ENCODE measurements at regions of chr15 and their contacts with region 1.

Region 1: GRCh38 chr15:45790325-45790943 is 155.6 kb downstream of the SQOR start:
- DNase-seq: no peak
- H3K4me3 ChIP-seq: no peak overlapping the region
- H3K27me3 ChIP-seq: 0 out of 2 replicates have a peak, but pooled peaks cover 1% of the 10 kb centered on the region
- CTCF ChIP-seq: peak; percentile 58

Region 2: GRCh38 chr15:45634442-45635190 is 155.8 kb before region 1 on chr15 and contains the start of gene SQOR:
- CTCF ChIA-PET with region 1: no interaction called
- POLR2A ChIA-PET with region 1: no interaction called
- DNase-seq: no peak
- H3K4me3 ChIP-seq: peak within 1 kb of the TSS; percentile 69
- H3K27me3 ChIP-seq: no peaks in the 10 kb centered on the region
- CTCF ChIP-seq: no peak
- polyA plus RNA-seq, gene SQOR: 40.6 and 47.5 TPM in 2 replicates

Region 3: DNA sequence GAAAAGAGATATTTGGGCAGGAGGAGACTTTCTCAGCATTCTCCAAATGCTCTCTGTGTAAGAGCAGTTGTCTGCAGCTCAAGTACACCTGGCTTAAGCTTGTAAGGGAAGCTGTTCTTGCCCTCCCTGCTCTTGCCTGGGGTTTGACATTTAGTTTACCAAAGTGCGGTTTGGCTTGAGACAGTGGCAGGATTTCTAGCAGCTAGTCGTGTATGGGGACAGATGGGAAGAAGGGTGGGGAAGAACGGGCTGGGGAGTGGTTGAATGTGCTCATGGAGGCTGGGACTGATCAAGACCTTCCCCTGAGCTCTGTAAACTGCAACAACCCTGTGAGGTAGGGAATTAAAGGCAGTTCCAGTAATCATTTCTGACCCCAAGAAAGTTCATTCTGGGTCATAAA is 115.8 kb before region 1 on chr15:
- CTCF ChIA-PET with region 1: no interaction called
- POLR2A ChIA-PET with region 1: no interaction called
- DNase-seq: no peak
- H3K4me3 ChIP-seq: no peak overlapping the region
- H3K27me3 ChIP-seq: no peaks in the 10 kb centered on the region
- CTCF ChIP-seq: no peak

Region 4: DNA sequence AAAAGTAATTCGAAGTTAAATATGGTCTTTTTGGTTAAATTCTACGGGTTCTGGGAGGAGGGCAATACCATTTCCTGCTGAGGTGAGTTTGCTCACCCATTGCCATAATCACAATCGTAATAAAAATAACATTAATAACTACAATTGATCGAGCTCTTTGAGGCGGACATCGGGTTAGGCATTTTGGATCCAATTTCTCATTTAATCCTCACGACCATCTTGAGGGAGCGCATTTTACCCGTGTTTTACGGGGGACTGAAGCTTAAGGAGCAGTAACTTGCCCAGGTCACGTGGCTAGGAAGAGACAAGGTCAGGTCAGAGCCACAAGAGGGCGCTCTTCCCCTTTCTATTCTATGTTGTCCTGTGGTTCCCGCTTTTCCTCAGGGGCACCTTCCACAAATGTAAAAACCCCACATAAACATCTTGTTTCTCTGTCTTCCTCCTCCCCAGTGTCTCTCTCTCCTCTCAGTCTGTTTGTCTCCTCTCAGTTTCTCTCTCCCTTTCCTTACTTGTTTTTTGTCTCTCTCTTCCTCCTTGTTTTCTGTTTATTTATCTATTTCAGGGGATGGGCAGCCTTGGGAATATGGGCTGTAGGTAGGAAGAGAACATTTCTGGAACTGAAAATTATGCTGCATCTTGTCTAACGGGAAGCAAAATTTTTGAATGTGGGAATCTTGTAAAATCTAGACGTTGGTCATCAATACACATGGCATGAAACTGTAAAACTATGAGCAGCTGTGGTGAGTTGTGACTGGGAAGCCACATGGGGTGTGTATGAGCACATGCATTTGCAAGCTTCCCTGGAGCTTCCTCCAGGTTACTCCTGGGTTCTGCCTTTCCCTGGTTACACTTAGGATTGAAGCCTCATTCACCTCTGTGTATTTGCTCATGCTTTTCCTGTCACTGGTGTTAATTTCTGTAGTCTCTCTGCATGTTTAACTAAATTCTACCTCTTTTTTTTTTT is 84.6 kb before region 1 on chr15:
- CTCF ChIA-PET with region 1: interaction called, 11 read pairs
- POLR2A ChIA-PET with region 1: no interaction called
- DNase-seq: peak; percentile 25
- H3K4me3 ChIP-seq: peak overlapping the region; percentile 53
- H3K27me3 ChIP-seq: peaks cover 6% of the 10 kb centered on the region; the same call in 1 of the 2 replicates
- CTCF ChIP-seq: peak; percentile 81

Region 5: DNA sequence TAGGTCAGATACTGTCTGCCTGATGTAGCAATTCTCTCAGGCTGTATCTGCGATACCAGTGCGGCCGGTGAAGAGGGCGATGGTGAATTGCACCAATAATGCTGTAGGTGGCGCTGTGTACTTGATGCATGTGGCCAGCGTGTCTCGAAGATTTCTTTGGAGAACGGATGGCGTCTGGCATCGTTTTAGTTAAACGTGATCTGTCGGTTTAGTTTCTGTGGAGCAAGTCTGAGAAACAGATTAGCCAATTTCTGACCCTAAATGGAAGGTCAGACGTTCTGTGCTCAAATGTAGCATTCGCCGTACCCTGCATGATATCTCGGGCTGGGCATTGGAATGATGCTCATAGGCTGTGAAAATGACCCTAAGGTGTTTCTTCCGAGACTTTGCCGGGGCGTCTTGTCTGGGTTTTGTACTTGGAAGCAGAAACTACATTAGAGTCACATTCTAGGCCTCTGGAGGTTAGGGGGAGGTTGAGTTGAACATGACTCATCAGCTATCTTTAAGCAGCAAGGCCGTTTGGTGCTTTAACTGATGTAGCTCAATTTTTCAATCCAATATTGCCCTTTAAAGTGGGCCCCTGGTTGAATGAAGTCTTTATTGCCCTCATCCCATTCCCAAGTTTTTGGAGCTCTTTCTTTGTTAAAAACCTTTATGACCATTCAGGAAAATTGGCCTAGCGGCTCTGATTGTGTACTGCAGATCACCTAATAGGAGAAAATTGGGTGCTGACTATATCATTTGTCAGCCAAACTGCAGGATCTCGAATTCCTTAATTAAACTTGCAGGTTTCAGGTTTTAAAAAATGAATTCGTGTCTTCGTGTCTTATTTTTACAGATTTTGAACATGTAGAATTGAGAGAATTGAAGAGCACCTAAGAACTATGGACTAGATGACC is 75.6 kb before region 1 on chr15:
- CTCF ChIA-PET with region 1: interaction called, 14 read pairs
- POLR2A ChIA-PET with region 1: no interaction called
- DNase-seq: peak; percentile 11
- H3K4me3 ChIP-seq: no peak overlapping the region
- H3K27me3 ChIP-seq: no peaks in the 10 kb centered on the region
- CTCF ChIP-seq: peak; percentile 85

Region 6: DNA sequence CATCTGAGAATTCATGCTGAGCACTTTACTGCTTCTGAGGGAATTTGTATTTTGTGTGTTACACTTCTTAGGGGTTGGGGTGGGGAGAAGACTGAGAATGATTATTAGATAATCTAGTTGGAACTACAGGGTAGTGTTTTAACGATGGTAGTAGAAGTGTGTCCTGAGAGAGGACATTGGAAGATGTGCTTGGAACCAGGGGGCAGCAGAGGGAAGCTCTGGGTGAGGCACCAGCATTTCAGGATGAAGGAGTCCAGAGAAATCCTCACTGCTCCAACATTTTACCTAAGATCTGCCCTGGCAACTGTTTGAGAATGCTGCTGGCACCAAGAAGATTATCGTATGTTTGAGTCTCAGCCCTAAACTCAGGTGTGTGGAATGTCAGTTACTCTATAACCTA is 10.1 kb before region 1 on chr15:
- CTCF ChIA-PET with region 1: interaction called, 18 read pairs
- POLR2A ChIA-PET with region 1: no interaction called
- DNase-seq: no peak
- H3K4me3 ChIP-seq: no peak overlapping the region
- H3K27me3 ChIP-seq: no peaks in the 10 kb centered on the region; the same call in 1 of the 2 replicates
- CTCF ChIP-seq: 0 out of 2 replicates have a peak, but pooled peaks have one; percentile 10

Region 7: DNA sequence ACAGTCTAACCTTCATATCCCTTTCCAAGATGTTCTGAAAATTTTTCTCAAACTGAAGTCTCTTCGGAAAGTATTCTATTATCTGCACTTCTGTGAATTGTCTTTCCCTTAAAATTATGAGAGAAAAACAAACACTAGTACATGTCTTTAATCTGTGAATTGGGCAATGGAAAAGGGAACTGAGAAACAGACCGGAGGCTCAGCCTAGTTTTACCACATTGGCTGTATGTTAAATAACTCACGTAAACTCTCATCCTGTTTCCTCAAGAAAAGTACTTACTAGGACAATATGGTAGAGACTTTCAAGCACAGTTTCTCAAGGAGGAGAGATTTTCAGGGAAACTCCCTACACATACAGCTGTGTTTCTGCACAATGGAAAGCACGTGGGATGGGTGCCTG is 944.7 kb after region 1 on chr15:
- CTCF ChIA-PET with region 1: no interaction called
- POLR2A ChIA-PET with region 1: no interaction called
- DNase-seq: no peak
- H3K4me3 ChIP-seq: no peak overlapping the region
- H3K27me3 ChIP-seq: no peaks in the 10 kb centered on the region
- CTCF ChIP-seq: no peak